ENCODE measurements at regions of chr16 and their contacts with region 1.

Region 1: GRCh38 chr16:54929090-54930004 is 1.3 kb upstream of the IRX5 start:
- DNase-seq: peak; percentile 100
- H3K4me3 ChIP-seq: peak overlapping the region; percentile 75 to 80
- H3K27ac ChIP-seq: peak overlapping the region; percentile 92 to 94
- H3K4me1 ChIP-seq: no peaks in the 10 kb centered on the region
- H3K27me3 ChIP-seq: no peaks in the 10 kb centered on the region
- CTCF ChIP-seq: peak in 2 of 4 experiments; percentile 23 to 39
- POLR2A ChIP-seq: peak; percentile 72

Region 2: GRCh38 chr16:53904533-53904932 is 1024.8 kb before region 1 on chr16:
- intact Hi-C with region 1: loop called (anchors 10 kb)
- DNase-seq: no peak
- H3K4me3 ChIP-seq: no peak overlapping the region
- H3K27ac ChIP-seq: no peak overlapping the region
- H3K4me1 ChIP-seq: no peaks in the 10 kb centered on the region
- H3K27me3 ChIP-seq: no peaks in the 10 kb centered on the region
- CTCF ChIP-seq: no peak
- POLR2A ChIP-seq: no peak

Region 3: GRCh38 chr16:54564841-54565240 is 364.5 kb before region 1 on chr16:
- intact Hi-C with region 1: no loop called
- DNase-seq: no peak
- H3K4me3 ChIP-seq: no peak overlapping the region
- H3K27ac ChIP-seq: no peak overlapping the region
- H3K4me1 ChIP-seq: no peaks in the 10 kb centered on the region
- H3K27me3 ChIP-seq: no peaks in the 10 kb centered on the region
- CTCF ChIP-seq: no peak
- POLR2A ChIP-seq: no peak

Measured in prostate gland (tissue), 2 donors.